ENCODE measurements at regions of chr13 and their contacts with region 1.

Region 1: DNA sequence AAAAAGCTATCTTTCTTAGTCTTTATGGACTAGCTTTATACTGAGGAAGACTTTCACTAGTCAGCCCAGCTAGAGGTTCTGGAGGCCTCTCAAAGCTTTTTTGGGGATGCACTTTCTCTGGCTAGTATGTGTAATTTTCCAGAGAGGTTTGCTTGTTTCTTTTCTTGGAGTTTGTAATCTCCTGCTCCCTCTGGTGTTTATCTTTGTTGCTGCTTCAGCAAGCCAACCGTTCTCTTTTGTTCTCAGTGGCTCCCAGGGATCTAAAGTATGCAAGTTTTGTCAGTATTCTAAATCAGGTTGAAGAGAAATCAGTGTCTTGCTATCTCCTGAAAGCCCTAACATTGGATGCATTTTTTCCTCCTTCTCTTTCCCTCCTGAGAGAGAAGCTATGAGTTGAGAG is 121.1 kb upstream of the MYO16 start:
- DNase-seq: peak in 4 of 5 donors; percentile 22 to 49 (median 28)
- H3K4me3 ChIP-seq: no peak overlapping the region
- H3K4me3 Mint-ChIP-seq: no peak overlapping the region
- H3K27ac ChIP-seq: no peak overlapping the region
- H3K27ac Mint-ChIP-seq: peak overlapping the region in 1 of 7 donors; percentile 21
- H3K4me1 ChIP-seq: peaks cover 3% of the 10 kb centered on the region
- H3K4me1 Mint-ChIP-seq: peaks cover 1 to 29% (median 7%) of the 10 kb centered on the region in 4 donors
- H3K27me3 ChIP-seq: no peaks in the 10 kb centered on the region
- H3K27me3 Mint-ChIP-seq: no peaks in the 10 kb centered on the region

Region 2: GRCh38 chr13:108227651-108228272 is 280.5 kb before region 1 on chr13:
- CTCF ChIA-PET with region 1: interaction called, 7 read pairs
- POLR2A ChIA-PET with region 1: no interaction called
- intact Hi-C with region 1: loop called (anchors 5 kb)
- DNase-seq: peak in 4 of 5 donors; percentile 41 to 56 (median 46)
- H3K4me3 ChIP-seq: no peak overlapping the region
- H3K4me3 Mint-ChIP-seq: no peak overlapping the region
- H3K27ac ChIP-seq: no peak overlapping the region
- H3K27ac Mint-ChIP-seq: peak overlapping the region in 1 of 7 donors; percentile 69
- H3K4me1 ChIP-seq: peaks cover 43% of the 10 kb centered on the region
- H3K4me1 Mint-ChIP-seq: peaks cover 41 to 74% (median 60%) of the 10 kb centered on the region in 4 donors
- H3K27me3 ChIP-seq: no peaks in the 10 kb centered on the region
- H3K27me3 Mint-ChIP-seq: no peaks in the 10 kb centered on the region

Region 3: DNA sequence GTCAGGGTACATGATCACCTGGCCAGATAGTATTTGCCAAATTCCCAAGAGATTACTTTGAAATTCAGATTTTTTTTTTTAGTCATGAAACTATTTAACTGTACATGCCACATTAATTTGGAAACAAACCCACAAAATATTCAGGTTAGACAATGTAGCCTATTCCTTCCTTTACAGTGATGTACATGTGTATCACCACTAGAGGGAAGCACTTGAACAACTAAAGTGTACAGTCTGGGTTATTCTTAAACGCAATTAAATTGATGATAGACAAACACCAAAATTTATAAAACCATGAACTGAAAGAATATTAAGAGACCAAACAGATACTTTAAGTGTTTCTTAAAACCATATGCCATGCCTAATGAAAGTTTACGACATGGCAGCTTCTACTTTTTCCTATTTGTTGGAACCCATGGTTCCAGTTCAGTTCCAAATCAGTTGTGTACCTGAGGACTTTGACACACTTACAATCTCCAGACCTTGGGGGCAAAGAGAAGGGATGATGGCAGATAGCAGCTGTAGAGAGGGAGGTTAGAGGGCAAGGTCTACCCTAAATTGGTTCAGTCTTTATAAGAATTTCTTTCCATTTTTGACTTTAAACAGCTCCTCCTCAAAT is 185.9 kb before region 1 on chr13:
- CTCF ChIA-PET with region 1: interaction called, 114 read pairs
- POLR2A ChIA-PET with region 1: interaction called, 5 read pairs
- intact Hi-C with region 1: loop called (anchors 1 kb)
- DNase-seq: peak in 4 of 5 donors; percentile 51 to 60 (median 54)
- H3K4me3 ChIP-seq: no peak overlapping the region
- H3K4me3 Mint-ChIP-seq: peak overlapping the region in 2 of 8 donors; percentile 37 to 40
- H3K27ac ChIP-seq: no peak overlapping the region
- H3K27ac Mint-ChIP-seq: peak overlapping the region in 1 of 7 donors; percentile 41
- H3K4me1 ChIP-seq: peaks cover 21% of the 10 kb centered on the region
- H3K4me1 Mint-ChIP-seq: peaks cover 13 to 49% (median 33%) of the 10 kb centered on the region in 4 donors
- H3K27me3 ChIP-seq: no peaks in the 10 kb centered on the region
- H3K27me3 Mint-ChIP-seq: no peaks in the 10 kb centered on the region

Region 4: GRCh38 chr13:108342369-108343289 is 165.6 kb before region 1 on chr13:
- CTCF ChIA-PET with region 1: interaction called, 83 read pairs
- POLR2A ChIA-PET with region 1: interaction called, 16 read pairs
- intact Hi-C with region 1: loop called (anchors 1 kb)
- DNase-seq: peak; percentile 18 to 68 (median 40)
- H3K4me3 ChIP-seq: peak overlapping the region in 1 of 2 donors; percentile 13
- H3K4me3 Mint-ChIP-seq: peak overlapping the region; percentile 36 to 89 (median 78)
- H3K27ac ChIP-seq: peak overlapping the region; percentile 15
- H3K27ac Mint-ChIP-seq: peak overlapping the region; percentile 51 to 95 (median 85)
- H3K4me1 ChIP-seq: peaks cover 56% of the 10 kb centered on the region
- H3K4me1 Mint-ChIP-seq: peaks cover 24 to 68% (median 44%) of the 10 kb centered on the region in 4 donors
- H3K27me3 ChIP-seq: no peaks in the 10 kb centered on the region
- H3K27me3 Mint-ChIP-seq: no peaks in the 10 kb centered on the region

Region 5: DNA sequence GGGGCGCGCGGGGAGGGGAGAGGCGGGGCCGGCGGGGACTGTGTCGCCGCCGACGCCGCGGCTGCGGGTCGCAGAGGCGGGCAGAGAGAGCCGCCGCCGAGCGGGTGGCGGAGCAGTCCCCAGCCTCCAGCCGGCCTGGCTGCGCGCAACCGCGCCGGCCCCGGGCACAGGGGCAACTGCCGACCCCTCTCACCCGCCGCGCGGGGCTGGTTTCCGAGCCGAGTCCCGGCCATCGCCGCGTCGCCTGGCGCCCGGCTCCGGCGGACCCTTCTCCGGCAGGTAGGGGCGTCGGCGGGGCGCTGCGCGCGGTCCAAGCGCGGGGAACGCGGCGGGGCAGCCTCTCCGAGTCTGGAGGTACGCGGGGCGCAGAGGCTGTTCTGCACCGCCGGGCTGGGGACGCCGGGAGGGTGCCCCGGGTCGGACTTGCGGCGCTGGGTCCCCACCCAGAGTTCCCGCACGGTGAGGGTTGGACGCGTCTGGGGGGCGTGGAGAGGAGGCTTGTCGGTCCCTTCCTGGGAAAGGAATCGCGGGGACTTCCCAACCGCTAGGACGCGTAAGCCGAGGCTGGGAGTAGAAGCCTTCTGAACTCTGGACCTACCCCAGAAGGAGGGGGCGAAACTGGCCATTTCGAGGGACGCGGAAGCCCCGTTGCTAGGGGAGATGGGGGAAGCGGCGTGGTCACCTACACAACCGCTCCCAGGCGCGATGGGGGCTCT is 12.5 kb before region 1 on chr13:
- CTCF ChIA-PET with region 1: interaction called, 24 read pairs
- POLR2A ChIA-PET with region 1: interaction called, 3 read pairs
- intact Hi-C with region 1: no loop called
- DNase-seq: peak in 4 of 5 donors; percentile 5 to 44 (median 8)
- H3K4me3 ChIP-seq: peak overlapping the region; percentile 47 to 56
- H3K4me3 Mint-ChIP-seq: peak overlapping the region; percentile 83 to 97 (median 90)
- H3K27ac ChIP-seq: no peak overlapping the region
- H3K27ac Mint-ChIP-seq: peak overlapping the region in 6 of 7 donors; percentile 25 to 89 (median 48)
- H3K4me1 ChIP-seq: peaks cover 20% of the 10 kb centered on the region
- H3K4me1 Mint-ChIP-seq: peaks cover 4 to 39% (median 24%) of the 10 kb centered on the region in 4 donors
- H3K27me3 ChIP-seq: peaks cover 7% of the 10 kb centered on the region
- H3K27me3 Mint-ChIP-seq: peaks cover 7 to 9% of the 10 kb centered on the region in 2 donors

Region 6: DNA sequence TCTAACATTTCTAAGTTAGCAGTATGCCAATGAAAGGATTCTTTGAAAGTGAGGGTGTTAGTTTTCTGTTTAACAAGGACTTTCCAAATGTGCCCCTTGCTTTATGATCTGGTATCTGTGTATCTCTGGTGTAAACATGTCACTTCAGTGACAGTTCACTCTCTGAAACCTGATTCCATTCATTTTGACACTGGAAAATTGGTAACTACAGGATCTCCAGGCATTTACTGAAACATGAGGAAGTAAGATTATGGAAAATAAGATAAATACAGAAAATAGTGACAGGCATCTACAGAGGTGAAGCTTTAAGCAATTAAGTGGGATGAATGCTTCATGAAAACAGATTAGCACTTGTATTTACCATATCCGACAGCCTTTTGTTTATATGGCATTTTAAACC is 19.6 kb after region 1 on chr13:
- CTCF ChIA-PET with region 1: no interaction called
- POLR2A ChIA-PET with region 1: no interaction called
- intact Hi-C with region 1: no loop called
- DNase-seq: no peak
- H3K4me3 ChIP-seq: no peak overlapping the region
- H3K4me3 Mint-ChIP-seq: no peak overlapping the region
- H3K27ac ChIP-seq: no peak overlapping the region
- H3K27ac Mint-ChIP-seq: peak overlapping the region in 1 of 7 donors; percentile 77
- H3K4me1 ChIP-seq: no peaks in the 10 kb centered on the region
- H3K4me1 Mint-ChIP-seq: peaks cover 0 to 8% (median 4%) of the 10 kb centered on the region in 4 donors
- H3K27me3 ChIP-seq: no peaks in the 10 kb centered on the region
- H3K27me3 Mint-ChIP-seq: peaks cover 2% of the 10 kb centered on the region in 2 donors

Region 7: DNA sequence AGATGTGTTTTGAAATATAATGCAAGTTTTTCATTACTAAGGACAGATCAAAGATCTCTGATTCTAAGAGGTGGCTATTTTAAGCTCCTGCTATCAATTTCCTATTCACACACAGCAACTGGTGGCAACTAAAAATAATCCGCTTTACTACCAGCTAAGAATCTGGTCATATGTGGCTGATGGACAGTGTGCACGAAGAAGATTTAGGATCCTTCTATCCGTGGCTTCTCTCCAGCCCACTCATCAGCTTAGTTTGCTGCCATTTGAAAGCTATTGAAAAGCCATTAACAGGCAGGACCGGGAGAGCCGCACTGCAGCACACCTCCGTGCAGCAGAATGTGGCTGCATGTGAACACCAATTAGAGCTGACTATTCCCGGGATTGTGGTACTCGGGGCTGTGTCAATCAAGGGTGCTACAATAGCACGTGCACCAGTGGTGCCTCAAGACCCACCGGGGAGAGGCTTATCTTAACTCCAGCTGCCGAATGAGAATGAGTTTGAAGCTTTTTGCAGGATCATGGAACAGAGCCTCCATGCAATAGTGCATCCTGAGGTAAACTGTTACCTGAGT is 121.0 kb after region 1 on chr13 and contains the start of gene MYO16:
- CTCF ChIA-PET with region 1: no interaction called
- POLR2A ChIA-PET with region 1: no interaction called
- intact Hi-C with region 1: no loop called
- DNase-seq: no peak
- H3K4me3 ChIP-seq: no peak within 1 kb of the TSS
- H3K4me3 Mint-ChIP-seq: no peak within 1 kb of the TSS
- H3K27ac ChIP-seq: no peak within 1 kb of the TSS
- H3K27ac Mint-ChIP-seq: no peak within 1 kb of the TSS
- H3K4me1 ChIP-seq: no peaks in the 10 kb centered on the region
- H3K4me1 Mint-ChIP-seq: no peaks in the 10 kb centered on the region
- H3K27me3 ChIP-seq: no peaks in the 10 kb centered on the region
- H3K27me3 Mint-ChIP-seq: no peaks in the 10 kb centered on the region
- total RNA-seq, gene MYO16: 12.0 to 14.9 TPM

Measured in CD4-positive, alpha-beta memory T cell (primary cell).